ENCODE measurements at regions of chr6 and their contacts with region 1.

Region 1: DNA sequence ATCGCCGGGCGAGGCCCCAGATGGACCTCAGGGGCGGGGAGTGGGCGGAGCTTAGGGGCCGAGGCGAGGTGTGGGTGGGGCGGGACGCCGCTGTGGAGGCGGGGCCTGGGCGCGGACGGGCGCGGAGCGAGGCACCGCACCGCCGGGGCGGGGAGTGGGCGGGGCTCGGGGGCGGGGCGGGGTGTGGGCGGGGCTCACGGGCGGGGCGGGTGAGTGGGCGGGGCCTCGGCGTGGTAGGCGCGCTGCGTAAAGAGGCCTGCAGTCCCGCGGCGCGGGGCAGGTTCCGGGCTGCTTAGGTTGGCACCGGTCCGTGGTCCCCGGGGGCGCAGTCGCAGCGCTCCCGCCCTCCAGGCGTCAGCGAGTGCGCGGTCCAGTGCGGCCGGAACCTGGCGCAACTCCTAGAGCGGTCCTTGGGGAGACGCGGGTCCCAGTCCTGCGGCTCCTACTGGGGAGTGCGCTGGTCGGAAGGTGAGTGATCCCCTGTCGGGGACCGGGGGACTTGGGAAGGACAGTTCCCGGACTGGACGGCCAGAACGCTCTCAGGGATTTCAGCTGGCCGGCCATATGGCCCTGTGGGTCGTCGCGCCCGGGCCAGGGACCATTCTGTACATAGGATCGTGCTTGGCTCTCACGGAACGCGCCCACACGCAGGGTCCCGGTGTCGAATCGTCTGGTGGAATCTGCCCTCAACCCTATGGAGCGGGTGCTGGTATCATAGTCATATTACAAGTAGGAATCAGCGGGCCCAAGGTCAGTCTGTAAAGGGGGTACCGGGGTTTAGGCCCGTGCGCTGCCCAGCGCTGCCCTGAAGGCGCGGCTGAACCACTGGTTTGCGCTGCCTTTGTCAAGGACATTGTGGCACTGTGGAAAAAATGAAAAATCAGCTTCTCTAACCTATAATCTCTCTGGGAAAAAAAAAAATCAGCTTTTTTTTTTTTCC is at the start of gene NQO2:
- DNase-seq: peak; percentile 98
- ATAC-seq: peak; percentile 95
- total RNA-seq, gene NQO2: 59.6 TPM

Region 2: DNA sequence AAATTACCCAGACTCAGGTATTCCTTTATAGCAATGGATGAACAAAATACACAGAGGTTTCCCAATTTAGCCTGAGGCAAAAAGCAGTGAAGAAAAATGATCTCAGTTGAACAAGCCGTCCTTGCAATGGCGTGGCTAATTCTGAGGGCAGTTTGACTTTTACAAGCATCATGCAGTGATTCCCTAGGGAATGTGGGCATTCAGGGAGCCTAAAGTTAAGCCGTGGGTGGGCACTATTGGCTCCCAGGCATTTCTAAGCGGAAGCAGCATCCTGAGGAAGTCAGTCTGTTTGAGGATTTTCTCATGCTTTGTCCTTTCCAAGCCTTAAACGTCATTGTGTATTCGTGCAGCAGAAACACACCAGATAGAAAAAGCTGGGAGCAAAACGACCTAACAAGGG is 383.1 kb before region 1 on chr6:
- intact Hi-C with region 1: no loop called
- DNase-seq: no peak
- ATAC-seq: no peak

Region 3: GRCh38 chr6:2853761-2854395 is 146.0 kb before region 1 on chr6:
- intact Hi-C with region 1: no loop called
- DNase-seq: no peak
- ATAC-seq: peak; percentile 35

Region 4: DNA sequence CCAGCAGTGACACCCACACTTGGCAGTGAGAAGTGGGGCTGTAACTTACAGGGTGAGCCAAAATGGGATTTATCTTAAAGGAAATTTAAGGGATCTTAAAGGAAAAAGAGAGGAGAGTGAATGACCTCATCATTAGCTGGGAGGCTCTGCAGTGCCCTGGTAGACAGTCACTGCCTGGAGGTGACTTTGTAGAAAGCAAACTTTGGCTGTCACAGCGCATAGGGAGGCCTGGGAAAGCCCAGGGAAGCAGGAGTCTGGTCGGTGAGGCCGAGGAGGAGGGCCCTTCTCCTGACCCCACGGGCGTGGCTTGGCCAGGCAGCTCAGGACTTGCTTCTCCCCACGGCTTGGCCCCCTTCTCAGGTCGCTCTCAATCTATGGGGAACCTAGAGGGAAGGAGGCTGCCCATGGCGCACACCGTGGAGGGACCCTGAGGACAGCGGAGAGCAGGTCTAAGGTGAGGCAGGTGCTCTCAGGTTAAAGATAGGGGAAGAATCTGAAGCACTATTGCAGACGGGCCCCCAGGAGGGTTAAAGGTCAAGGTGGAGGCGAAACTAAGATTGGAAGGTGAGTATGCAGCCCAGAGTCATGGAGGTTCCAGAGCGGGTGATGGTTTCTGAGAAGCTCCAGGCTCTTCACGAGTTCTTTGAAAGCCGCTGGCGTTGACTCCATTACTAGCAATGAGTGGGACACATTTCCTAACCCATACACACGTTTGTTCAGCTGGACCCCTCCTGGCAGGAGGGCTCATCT is 52.8 kb after region 1 on chr6:
- intact Hi-C with region 1: loop called (anchors 2 kb)
- DNase-seq: no peak
- ATAC-seq: no peak

Region 5: GRCh38 chr6:3119040-3119723 is 119.3 kb after region 1 on chr6:
- intact Hi-C with region 1: no loop called
- DNase-seq: no peak
- ATAC-seq: peak; percentile 39

Region 6: GRCh38 chr6:3776881-3777507 is 777.1 kb after region 1 on chr6:
- intact Hi-C with region 1: no loop called
- DNase-seq: no peak
- ATAC-seq: no peak

Measured in left ventricle myocardium superior (tissue), 1 donor.